PC-9 (cell line): ENCODE measurements at regions of chr9 and their contacts with region 1.

Region 1: GRCh38 chr9:74543145-74543544 is 46.0 kb downstream of the RORB start:
- DNase-seq: no peak
- H3K4me3 ChIP-seq: no peak overlapping the region
- H3K27ac ChIP-seq: no peak overlapping the region
- H3K4me1 ChIP-seq: no peaks in the 10 kb centered on the region
- H3K27me3 ChIP-seq: no peaks in the 10 kb centered on the region
- CTCF ChIP-seq: no peak

Region 2: DNA sequence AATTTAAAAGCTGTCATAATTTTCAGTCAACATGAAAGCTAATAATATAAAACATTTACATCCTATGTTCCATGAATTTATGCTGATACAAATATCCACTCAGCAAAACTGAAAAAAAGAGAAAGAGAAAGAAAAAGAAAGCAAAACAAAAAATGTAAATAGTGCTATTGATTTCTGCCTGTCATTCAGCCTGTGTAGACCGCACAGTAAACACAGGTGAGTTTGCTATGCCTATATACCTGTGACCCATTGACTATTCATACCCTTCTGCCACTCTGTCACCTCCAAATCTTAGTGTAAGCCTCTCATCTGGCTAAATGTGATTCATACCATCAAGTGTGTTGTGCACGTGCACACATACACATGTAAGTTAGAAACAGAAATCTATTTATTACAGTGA is 405.0 kb before region 1 on chr9:
- CTCF ChIA-PET with region 1: no interaction called
- POLR2A ChIA-PET with region 1: no interaction called
- intact Hi-C with region 1: no loop called
- DNase-seq: no peak
- H3K4me3 ChIP-seq: no peak overlapping the region
- H3K27ac ChIP-seq: no peak overlapping the region
- H3K4me1 ChIP-seq: no peaks in the 10 kb centered on the region
- H3K27me3 ChIP-seq: no peaks in the 10 kb centered on the region
- CTCF ChIP-seq: no peak

Region 3: DNA sequence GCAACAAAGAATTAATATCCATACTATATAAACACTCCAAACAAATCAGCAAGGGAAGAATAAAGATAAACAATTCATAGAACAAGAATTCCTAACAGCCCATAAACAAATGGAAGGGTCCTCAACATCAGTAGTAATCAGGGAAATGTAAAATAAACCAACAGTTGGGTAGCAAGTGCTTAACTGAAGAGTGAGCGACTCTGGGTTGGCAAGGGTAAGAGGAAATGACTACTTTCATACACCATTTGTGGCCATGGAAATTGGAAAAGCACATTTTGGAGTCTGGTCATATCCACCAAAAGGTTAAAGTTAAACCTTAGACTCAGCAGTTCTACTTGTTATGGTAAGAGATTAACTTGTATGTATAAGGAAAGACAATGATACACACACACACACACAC is 63.4 kb before region 1 on chr9:
- CTCF ChIA-PET with region 1: no interaction called
- POLR2A ChIA-PET with region 1: no interaction called
- intact Hi-C with region 1: loop called (anchors 10 kb)
- DNase-seq: no peak
- H3K4me3 ChIP-seq: no peak overlapping the region
- H3K27ac ChIP-seq: no peak overlapping the region
- H3K4me1 ChIP-seq: no peaks in the 10 kb centered on the region
- H3K27me3 ChIP-seq: no peaks in the 10 kb centered on the region
- CTCF ChIP-seq: no peak

Region 4: DNA sequence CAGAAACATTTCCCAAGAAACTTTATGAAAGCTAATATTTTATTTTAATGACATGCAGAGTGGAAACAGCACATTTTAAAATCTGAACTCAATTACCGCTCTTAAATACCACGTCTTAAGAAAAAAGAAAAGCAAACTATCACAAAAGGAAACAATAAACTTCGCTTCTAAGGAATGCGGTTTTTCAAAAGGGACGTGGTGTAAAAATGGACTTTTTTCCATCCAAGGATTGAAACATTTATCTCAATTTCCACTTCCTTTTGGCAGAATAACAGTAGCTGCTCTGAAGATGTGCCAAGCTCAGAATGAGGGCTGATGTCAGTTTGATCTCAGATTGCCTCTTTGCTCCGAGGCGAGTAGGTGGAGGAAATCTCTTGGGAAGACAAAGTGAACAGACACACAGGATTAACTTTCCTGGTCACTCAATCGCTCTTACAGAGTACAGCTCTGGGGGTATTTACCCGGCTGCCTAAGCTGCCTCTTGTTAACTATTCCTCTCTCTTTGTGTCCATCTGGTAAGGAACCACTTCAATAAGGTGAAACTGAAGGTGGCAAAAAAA is 186.1 kb after region 1 on chr9:
- CTCF ChIA-PET with region 1: no interaction called
- POLR2A ChIA-PET with region 1: no interaction called
- intact Hi-C with region 1: no loop called
- DNase-seq: no peak
- H3K4me3 ChIP-seq: no peak overlapping the region
- H3K27ac ChIP-seq: no peak overlapping the region
- H3K4me1 ChIP-seq: no peaks in the 10 kb centered on the region
- H3K27me3 ChIP-seq: no peaks in the 10 kb centered on the region
- CTCF ChIP-seq: no peak